GM12878 (cell line): ENCODE measurements at regions of chr9 and their contacts with region 1.

Region 1: GRCh38 chr9:77163884-77164283 is 13.4 kb upstream of the VPS13A start:
- DNase-seq: no peak
- ATAC-seq: no peak
- H3K4me3 ChIP-seq: no peak overlapping the region
- H3K27ac ChIP-seq: no peak overlapping the region
- H3K4me1 ChIP-seq: no peaks in the 10 kb centered on the region
- H3K27me3 ChIP-seq: no peaks in the 10 kb centered on the region; a peak in 2 of 4 replicates
- CTCF ChIP-seq: no peak
- EP300 ChIP-seq: no peak
- POLR2A ChIP-seq: no peak
- RAD21 ChIP-seq: no peak

Region 2: GRCh38 chr9:76658535-76659231 is 505.2 kb before region 1 on chr9:
- CTCF ChIA-PET with region 1: no interaction called
- POLR2A ChIA-PET with region 1: no interaction called
- RAD21 ChIA-PET with region 1: no interaction called
- SMC1A ChIA-PET with region 1: no interaction called
- in situ Hi-C with region 1: no loop called
- intact Hi-C with region 1: loop called (anchors 10 kb)
- DNase-seq: no peak
- ATAC-seq: peak; percentile 93
- H3K4me3 ChIP-seq: no peak overlapping the region
- H3K27ac ChIP-seq: no peak overlapping the region
- H3K4me1 ChIP-seq: no peaks in the 10 kb centered on the region; the same call in 1 of the 2 replicates
- H3K27me3 ChIP-seq: 0 out of 4 replicates have a peak, but pooled peaks cover 0 to 2% of the 10 kb centered on the region in 2 experiments
- CTCF ChIP-seq: peak; percentile 39 to 73 (median 72); a peak in 5 of 6 replicates
- EP300 ChIP-seq: no peak
- POLR2A ChIP-seq: no peak
- RAD21 ChIP-seq: peak; percentile 90

Region 3: DNA sequence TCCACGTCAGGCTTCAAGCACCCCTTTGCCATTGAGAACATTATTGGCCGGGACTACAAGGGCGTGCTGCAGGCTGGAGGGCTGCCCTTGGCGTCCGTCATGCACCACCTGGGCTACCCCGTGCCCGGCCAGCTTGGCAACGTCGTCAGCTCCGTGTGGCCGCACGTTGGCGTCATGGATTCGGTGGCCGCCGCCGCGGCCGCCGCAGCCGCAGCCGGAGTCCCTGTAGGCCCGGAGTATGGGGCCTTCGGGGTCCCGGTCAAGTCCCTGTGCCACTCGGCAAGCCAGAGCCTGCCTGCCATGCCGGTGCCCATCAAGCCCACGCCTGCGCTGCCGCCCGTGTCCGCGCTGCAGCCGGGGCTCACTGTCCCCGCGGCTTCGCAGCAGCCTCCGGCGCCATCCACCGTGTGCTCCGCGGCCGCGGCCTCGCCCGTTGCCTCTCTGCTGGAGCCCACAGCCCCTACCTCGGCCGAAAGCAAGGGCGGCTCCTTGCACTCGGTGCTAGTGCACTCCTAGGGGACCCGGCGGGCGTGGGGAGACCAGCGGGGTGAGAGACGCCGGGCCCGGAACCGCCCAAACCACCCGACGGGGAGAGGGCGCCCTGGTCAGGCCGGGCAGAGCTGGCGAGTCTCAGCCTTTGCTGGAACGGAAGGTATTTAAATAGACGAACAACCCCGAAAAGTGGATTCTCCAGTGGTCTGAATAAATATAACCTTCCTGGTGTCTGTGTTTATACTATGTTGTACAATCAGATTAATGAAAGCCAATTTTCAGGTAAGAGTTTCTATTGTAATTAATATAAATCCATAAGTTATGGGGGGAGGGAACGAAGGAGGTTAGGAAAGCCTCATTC is 143.2 kb before region 1 on chr9:
- CTCF ChIA-PET with region 1: no interaction called
- POLR2A ChIA-PET with region 1: no interaction called
- RAD21 ChIA-PET with region 1: no interaction called
- SMC1A ChIA-PET with region 1: no interaction called
- in situ Hi-C with region 1: no loop called
- intact Hi-C with region 1: loop called (anchors 10 kb)
- DNase-seq: no peak
- ATAC-seq: no peak
- H3K4me3 ChIP-seq: no peak overlapping the region
- H3K27ac ChIP-seq: no peak overlapping the region
- H3K4me1 ChIP-seq: no peaks in the 10 kb centered on the region
- H3K27me3 ChIP-seq: peaks cover 14 to 24% of the 10 kb centered on the region in 2 experiments
- CTCF ChIP-seq: no peak
- EP300 ChIP-seq: no peak
- POLR2A ChIP-seq: no peak
- RAD21 ChIP-seq: no peak

Region 4: GRCh38 chr9:77038281-77039036 is 125.4 kb before region 1 on chr9:
- CTCF ChIA-PET with region 1: no interaction called
- POLR2A ChIA-PET with region 1: no interaction called
- RAD21 ChIA-PET with region 1: no interaction called
- SMC1A ChIA-PET with region 1: no interaction called
- in situ Hi-C with region 1: no loop called
- intact Hi-C with region 1: no loop called
- DNase-seq: no peak
- ATAC-seq: no peak
- H3K4me3 ChIP-seq: no peak overlapping the region
- H3K27ac ChIP-seq: no peak overlapping the region
- H3K4me1 ChIP-seq: no peaks in the 10 kb centered on the region
- H3K27me3 ChIP-seq: no peaks in the 10 kb centered on the region
- CTCF ChIP-seq: no peak
- EP300 ChIP-seq: no peak
- POLR2A ChIP-seq: no peak
- RAD21 ChIP-seq: no peak

Region 5: GRCh38 chr9:77183581-77183980 is 19.7 kb after region 1 on chr9:
- CTCF ChIA-PET with region 1: interaction called, 13 read pairs
- POLR2A ChIA-PET with region 1: no interaction called
- RAD21 ChIA-PET with region 1: interaction called, 3 read pairs
- SMC1A ChIA-PET with region 1: interaction called, 4 read pairs
- in situ Hi-C with region 1: no loop called
- intact Hi-C with region 1: no loop called
- DNase-seq: no peak
- ATAC-seq: no peak
- H3K4me3 ChIP-seq: no peak overlapping the region
- H3K27ac ChIP-seq: no peak overlapping the region
- H3K4me1 ChIP-seq: no peaks in the 10 kb centered on the region
- H3K27me3 ChIP-seq: no peaks in the 10 kb centered on the region
- CTCF ChIP-seq: no peak
- EP300 ChIP-seq: no peak
- POLR2A ChIP-seq: no peak
- RAD21 ChIP-seq: no peak

Region 6: DNA sequence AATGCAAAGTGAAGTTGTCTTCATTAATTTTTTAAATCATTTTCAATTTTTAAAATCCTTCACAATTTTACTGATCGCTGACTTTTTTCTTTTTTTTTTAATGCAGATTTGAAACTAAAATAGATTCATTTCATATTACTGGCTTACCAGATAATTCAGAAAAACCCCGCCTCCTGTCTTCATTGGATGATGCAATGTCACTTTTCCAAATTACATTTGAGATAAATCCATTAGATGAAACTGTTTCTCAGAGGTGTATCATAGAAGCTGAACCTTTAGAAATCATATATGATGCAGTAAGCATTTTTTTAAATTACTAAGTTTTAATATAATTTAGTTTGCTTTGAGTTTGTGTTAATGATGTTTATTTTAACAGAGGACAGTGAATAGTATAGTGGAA is 74.0 kb after region 1 on chr9:
- CTCF ChIA-PET with region 1: no interaction called
- POLR2A ChIA-PET with region 1: no interaction called
- RAD21 ChIA-PET with region 1: no interaction called
- SMC1A ChIA-PET with region 1: no interaction called
- in situ Hi-C with region 1: no loop called
- intact Hi-C with region 1: no loop called
- DNase-seq: no peak
- ATAC-seq: no peak
- H3K4me3 ChIP-seq: no peak overlapping the region
- H3K27ac ChIP-seq: no peak overlapping the region
- H3K4me1 ChIP-seq: no peaks in the 10 kb centered on the region
- H3K27me3 ChIP-seq: no peaks in the 10 kb centered on the region
- CTCF ChIP-seq: no peak
- EP300 ChIP-seq: no peak
- POLR2A ChIP-seq: no peak
- RAD21 ChIP-seq: no peak

Region 7: GRCh38 chr9:77271023-77271690 is 107.3 kb after region 1 on chr9:
- CTCF ChIA-PET with region 1: no interaction called
- POLR2A ChIA-PET with region 1: no interaction called
- RAD21 ChIA-PET with region 1: no interaction called
- SMC1A ChIA-PET with region 1: no interaction called
- in situ Hi-C with region 1: no loop called
- intact Hi-C with region 1: no loop called
- DNase-seq: no peak
- ATAC-seq: peak; percentile 78
- H3K4me3 ChIP-seq: no peak overlapping the region
- H3K27ac ChIP-seq: no peak overlapping the region
- H3K4me1 ChIP-seq: no peaks in the 10 kb centered on the region
- H3K27me3 ChIP-seq: no peaks in the 10 kb centered on the region
- CTCF ChIP-seq: no peak
- EP300 ChIP-seq: no peak
- POLR2A ChIP-seq: no peak
- RAD21 ChIP-seq: no peak

Region 8: GRCh38 chr9:77392328-77392727 is 228.4 kb after region 1 on chr9:
- CTCF ChIA-PET with region 1: no interaction called
- POLR2A ChIA-PET with region 1: no interaction called
- RAD21 ChIA-PET with region 1: no interaction called
- SMC1A ChIA-PET with region 1: no interaction called
- in situ Hi-C with region 1: no loop called
- intact Hi-C with region 1: no loop called
- DNase-seq: no peak
- ATAC-seq: no peak
- H3K4me3 ChIP-seq: no peak overlapping the region
- H3K27ac ChIP-seq: no peak overlapping the region
- H3K4me1 ChIP-seq: no peaks in the 10 kb centered on the region
- H3K27me3 ChIP-seq: no peaks in the 10 kb centered on the region
- CTCF ChIP-seq: no peak
- EP300 ChIP-seq: no peak
- POLR2A ChIP-seq: no peak
- RAD21 ChIP-seq: no peak

Region 9: GRCh38 chr9:77456829-77457437 is 293.0 kb after region 1 on chr9:
- CTCF ChIA-PET with region 1: interaction called, 46 read pairs
- POLR2A ChIA-PET with region 1: no interaction called
- RAD21 ChIA-PET with region 1: interaction called, 16 read pairs
- SMC1A ChIA-PET with region 1: interaction called, 17 read pairs
- in situ Hi-C with region 1: no loop called
- intact Hi-C with region 1: loop called (anchors 5 kb)
- DNase-seq: no peak
- ATAC-seq: peak; percentile 91
- H3K4me3 ChIP-seq: no peak overlapping the region
- H3K27ac ChIP-seq: no peak overlapping the region
- H3K4me1 ChIP-seq: no peaks in the 10 kb centered on the region
- H3K27me3 ChIP-seq: no peaks in the 10 kb centered on the region; a peak in 2 of 4 replicates
- CTCF ChIP-seq: peak; percentile 79 to 94 (median 90)
- EP300 ChIP-seq: no peak
- POLR2A ChIP-seq: no peak
- RAD21 ChIP-seq: peak; percentile 47

Region 10: GRCh38 chr9:77751341-77752091 is 587.6 kb after region 1 on chr9:
- CTCF ChIA-PET with region 1: no interaction called
- POLR2A ChIA-PET with region 1: no interaction called
- RAD21 ChIA-PET with region 1: no interaction called
- SMC1A ChIA-PET with region 1: no interaction called
- in situ Hi-C with region 1: no loop called
- intact Hi-C with region 1: loop called (anchors 10 kb)
- DNase-seq: no peak
- ATAC-seq: peak; percentile 76
- H3K4me3 ChIP-seq: no peak overlapping the region
- H3K27ac ChIP-seq: no peak overlapping the region
- H3K4me1 ChIP-seq: no peaks in the 10 kb centered on the region
- H3K27me3 ChIP-seq: no peaks in the 10 kb centered on the region
- CTCF ChIP-seq: peak; percentile 34 to 53 (median 34); a peak in 4 of 6 replicates
- EP300 ChIP-seq: no peak
- POLR2A ChIP-seq: no peak
- RAD21 ChIP-seq: peak; percentile 51